ENCODE measurements at regions of chr15 and their contacts with region 1.

Region 1: DNA sequence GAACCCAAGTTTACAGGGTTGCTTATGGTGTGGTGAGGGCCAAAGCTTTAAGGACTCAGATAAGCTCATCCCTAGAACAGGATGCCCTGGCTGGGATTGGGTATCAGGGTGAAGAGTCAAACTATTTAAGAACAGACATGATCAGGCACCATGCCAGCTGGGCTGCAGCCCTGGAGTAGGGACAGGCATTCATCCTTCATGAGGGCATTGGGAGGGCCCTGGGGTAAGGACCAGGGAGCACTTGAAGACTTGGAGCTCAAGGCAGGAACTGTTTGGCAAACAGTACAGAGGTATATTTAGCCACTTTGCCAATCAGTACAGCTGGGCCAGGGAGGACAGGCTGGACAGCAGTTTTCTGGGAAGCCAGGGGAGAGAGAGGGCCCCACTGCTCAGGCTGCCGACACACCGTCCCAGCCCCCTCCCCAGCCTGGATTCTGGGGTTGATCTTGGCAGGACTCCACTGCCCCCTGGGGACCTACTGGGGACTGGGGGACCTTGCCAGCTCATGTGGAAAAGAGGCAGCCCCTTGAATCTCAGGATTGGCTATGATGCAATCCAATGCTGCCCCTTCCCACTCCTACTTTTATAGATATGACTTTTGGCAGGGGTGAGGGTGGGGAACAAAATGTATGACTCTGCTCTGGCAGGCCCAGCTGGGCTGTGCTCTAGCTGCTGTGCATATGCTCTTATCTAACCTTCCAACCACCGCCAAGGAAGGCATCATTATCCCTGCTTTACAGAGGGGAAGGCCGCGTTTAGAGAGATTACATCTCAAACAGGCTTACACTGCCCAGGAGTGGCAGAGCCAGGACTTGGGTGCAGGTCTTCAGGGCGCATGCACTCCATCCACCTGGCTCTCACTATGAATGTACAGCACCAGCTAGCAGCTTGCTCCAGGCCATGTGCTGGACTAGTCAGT is 2.3 kb downstream of the PLA2G4E start:
- DNase-seq: peak; percentile 60

Region 2: DNA sequence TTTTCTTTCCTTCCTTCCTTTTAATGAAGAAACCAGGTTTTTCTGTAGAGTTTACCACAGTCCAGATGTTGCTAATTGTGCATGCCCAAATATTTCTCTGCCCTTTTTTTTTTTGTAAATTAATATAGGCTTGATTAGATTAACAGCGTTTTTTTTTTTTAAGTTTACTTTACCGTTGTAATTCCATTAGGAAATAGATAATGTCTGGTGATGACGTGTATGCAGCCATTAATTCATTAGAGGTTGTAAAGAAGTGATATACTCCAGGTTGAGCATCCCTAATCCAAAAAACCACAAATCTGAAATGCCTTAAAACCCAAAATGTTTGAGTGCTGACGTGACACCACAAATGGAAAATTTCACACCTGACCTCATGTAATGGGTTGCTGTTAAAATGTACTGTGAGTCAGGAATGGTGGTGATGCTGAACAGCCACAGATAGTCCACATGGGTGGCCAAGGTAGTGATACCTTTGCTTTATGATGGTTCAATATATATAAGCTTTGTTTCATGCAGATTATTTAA is 1381.3 kb before region 1 on chr15:
- intact Hi-C with region 1: no loop called
- DNase-seq: no peak

Region 3: DNA sequence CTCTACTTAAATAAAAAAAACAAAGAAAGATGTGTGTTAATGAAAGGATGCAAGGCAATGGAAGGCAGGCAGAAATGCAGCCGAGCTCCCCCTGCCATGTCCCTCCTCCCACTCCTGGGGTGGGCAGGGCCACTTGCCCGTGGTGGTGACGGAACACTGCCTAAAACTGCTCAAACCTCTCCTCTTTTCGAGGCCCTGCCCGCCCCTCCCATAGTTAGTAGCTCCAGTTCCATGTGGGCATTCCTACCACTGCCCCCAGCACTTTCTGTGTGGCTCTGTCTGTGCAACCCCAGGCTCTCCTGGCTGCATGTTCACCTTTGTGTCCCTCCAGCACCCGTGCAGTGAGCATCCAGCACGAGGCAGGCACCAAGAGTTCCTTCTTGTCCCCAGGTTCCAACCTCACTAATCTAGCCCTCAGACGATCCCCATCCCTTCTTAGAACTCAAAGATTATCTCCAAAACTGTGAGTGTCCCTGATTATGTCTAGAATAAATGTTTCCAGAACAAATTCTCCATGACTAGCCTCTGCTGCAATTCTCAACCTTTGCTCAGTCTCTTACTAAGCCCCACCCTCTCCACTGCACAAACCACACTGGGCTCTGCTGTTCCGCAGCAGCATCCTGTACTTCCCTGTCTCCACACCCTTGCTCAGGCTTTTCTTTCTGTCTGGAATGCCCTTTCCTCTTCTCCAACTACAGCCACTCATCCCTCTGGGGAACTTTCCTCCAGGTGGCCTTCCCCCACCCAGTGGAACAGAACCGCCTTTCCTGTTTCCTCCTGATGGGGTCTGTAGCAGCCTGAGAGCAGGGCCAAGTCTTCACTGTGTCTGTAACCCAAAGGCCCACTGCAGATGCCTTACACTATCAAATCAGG is 92.1 kb before region 1 on chr15:
- intact Hi-C with region 1: no loop called
- DNase-seq: peak; percentile 76

Region 4: DNA sequence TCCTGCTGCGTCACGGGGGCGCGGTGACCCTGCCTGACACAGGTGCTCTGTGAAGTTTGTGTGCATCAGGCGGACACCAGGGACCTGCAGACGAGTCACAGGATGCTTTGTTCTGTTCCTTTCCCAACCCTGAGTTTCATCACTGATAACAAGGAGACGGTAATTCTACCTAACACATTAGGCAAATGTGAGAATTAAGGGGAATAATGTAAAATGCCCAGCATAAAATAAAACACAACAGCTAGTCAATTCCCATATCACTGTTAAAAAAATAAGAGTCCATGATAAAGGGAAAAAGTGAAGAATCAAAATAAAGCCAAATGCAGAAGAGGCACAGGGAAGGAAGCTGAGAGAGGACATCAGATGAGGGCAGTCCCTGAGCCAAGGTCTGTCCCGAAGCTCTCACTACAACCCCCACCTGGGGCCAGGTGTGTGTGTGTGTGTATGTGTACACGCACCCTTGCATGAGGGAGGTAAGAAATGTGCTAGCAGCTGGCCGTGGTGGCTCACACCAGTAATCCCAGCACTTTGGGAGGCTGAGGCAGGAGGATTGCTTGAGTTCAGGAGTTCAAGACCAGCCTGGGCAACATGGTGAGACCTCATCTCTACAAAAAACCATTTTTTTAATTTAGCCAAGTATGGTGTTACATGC is 48.3 kb after region 1 on chr15:
- intact Hi-C with region 1: no loop called
- DNase-seq: no peak

Region 5: DNA sequence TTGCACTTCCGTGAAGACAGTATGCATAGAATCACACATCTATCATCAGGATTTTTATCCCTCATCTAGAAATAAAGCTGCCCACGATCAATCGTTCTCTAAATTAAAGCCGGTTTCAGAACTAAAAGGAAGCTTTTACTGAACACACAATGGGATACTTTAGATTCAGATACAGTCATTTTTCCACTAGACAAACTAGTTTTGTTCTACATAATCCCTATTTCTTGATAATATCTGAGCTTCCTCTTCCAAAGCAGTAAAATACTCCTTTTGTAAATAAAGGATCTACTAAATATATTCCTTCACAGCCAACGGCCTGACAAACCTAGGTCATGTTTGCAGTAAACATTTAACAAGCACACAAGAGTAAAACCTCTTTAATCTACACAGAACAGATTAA is 252.4 kb after region 1 on chr15:
- intact Hi-C with region 1: no loop called
- DNase-seq: no peak

Region 6: DNA sequence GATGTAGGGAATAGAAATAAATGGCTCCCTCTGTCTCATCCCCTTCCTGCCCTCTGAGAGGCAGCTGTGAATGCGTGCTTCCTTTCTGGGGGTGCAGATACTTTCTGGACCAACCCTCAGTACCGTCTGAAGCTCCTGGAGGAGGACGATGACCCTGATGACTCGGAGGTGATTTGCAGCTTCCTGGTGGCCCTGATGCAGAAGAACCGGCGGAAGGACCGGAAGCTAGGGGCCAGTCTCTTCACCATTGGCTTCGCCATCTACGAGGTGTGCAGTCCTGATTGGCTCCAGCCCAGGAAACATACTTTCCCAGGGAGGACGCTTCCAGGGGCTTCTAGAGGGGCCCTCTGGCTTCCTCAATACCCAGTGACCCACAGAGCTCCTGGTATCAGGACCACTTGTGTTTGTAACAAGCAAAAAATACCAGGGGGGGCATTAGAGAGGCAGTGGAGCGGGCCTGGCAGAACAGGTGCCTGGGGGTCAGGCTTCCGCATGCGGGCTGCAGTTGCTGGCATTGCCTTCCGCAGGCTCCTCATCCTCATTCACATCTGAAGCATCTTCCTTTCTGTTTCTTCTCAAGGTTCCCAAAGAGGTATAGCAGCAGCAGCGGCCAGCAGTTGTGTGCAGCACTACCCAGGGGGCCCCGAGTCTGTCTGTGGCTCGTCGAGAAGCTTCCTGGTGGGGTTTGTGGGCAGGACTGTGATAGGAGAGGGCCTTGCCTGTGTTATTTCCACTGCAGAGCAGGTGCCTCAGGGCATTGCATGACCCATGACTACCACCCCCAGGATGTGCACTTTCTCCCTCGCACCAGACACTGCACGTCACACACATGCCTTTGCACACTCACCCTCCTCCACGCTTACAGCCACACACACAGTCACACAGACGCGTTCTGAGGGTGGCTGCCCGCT is 383.2 kb after region 1 on chr15:
- intact Hi-C with region 1: loop called in 1 of 2 experiments (anchors 2 kb)
- DNase-seq: no peak

Measured in posterior vena cava (tissue), 2 donors.